Left colon (tissue), 2 donors: ENCODE measurements at regions of chr4 and their contacts with region 1.

Region 1: DNA sequence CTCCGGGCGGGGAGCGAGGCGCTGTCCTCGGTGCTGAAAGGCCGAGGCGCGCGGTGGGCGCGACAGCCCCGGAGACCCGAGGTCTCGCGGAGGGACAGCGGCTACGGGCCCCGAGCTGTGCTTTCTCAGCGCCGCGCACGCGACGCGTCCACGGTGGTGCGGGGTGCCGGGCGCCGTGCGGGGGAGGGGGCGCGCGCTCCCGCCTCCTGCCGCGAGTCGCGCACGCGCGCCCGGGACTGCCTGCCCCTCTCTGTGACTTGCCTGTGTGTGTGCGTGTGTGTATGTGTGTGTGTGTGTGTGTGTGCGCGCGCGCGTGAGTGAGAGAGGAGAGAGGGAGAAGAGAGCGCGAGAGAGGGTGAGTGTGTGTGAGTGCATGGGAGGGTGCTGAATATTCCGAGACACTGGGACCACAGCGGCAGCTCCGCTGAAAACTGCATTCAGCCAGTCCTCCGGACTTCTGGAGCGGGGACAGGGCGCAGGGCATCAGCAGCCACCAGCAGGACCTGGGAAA is at the start of gene GRIA2:
- DNase-seq: peak in 1 of 2 donors; percentile 28
- ATAC-seq: peak; percentile 50
- total RNA-seq, gene GRIA2: 0.08 to 0.12 TPM

Region 2: GRCh38 chr4:157978680-157979361 is 758.4 kb after region 1 on chr4:
- intact Hi-C with region 1: loop called in 1 of 2 experiments (anchors 10 kb)
- DNase-seq: peak in 1 of 2 donors; percentile 22
- ATAC-seq: peak; percentile 75